IMR-90 (cell line): ENCODE measurements at regions of chr10 and their contacts with region 1.

Region 1: GRCh38 chr10:95133016-95133752 is 60.9 kb upstream of the ACSM6 start:
- DNase-seq: peak; percentile 73
- ATAC-seq: peak; percentile 82
- H3K4me3 ChIP-seq: no peak overlapping the region
- H3K27ac ChIP-seq: no peak overlapping the region
- H3K4me1 ChIP-seq: no peaks in the 10 kb centered on the region
- H3K27me3 ChIP-seq: no peaks in the 10 kb centered on the region
- CTCF ChIP-seq: peak; percentile 80
- POLR2A ChIP-seq: no peak
- RAD21 ChIP-seq: peak; percentile 92

Region 2: GRCh38 chr10:94630017-94630688 is 503.0 kb before region 1 on chr10:
- CTCF ChIA-PET with region 1: no interaction called
- POLR2A ChIA-PET with region 1: no interaction called
- dilution Hi-C with region 1: no loop called
- in situ Hi-C with region 1: no loop called
- intact Hi-C with region 1: loop called (anchors 2 kb)
- DNase-seq: peak; percentile 12
- ATAC-seq: no peak
- H3K4me3 ChIP-seq: no peak overlapping the region
- H3K27ac ChIP-seq: no peak overlapping the region
- H3K4me1 ChIP-seq: no peaks in the 10 kb centered on the region
- H3K27me3 ChIP-seq: no peaks in the 10 kb centered on the region
- CTCF ChIP-seq: peak; percentile 59
- POLR2A ChIP-seq: no peak
- RAD21 ChIP-seq: peak; percentile 47

Region 3: DNA sequence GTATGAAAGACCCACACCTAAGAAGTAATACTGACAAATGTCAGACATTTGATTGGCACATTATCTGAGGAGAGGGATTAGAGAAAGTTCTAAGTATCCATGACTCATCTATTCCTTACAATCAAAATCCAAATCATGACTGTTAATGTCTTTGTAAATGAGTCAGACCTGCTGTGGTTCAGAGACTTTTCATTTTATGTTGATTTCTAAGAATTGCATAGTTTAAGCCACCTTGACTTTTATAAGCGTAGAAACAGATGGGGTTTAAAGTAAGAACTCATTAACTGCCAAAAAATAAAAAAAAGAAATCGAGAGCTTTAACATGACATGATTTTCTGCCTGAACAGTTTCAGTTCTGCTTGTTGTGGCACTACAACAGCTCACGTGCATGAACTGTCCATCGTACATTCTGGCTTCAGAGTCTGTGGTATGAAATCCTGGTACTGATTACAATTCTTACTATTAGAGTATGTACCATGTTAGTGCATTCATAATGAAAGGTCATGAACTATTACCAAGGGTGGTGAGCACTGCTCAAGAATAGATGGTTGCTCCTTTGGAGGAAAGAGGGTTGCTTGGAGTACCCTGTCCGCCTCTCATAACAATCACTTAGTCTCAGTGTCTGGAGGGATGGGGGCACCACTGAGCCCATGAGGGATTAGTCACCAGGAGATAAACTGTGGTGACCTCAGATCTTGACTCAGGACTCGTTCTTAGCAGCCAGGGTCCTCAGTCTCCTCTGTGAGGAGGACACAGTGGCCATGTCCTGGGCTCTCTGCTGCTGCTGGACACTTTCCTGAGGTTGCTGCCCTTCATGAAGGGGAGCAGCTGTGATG is 103.1 kb after region 1 on chr10:
- CTCF ChIA-PET with region 1: no interaction called
- POLR2A ChIA-PET with region 1: no interaction called
- dilution Hi-C with region 1: no loop called
- in situ Hi-C with region 1: loop called (anchors 10 kb)
- intact Hi-C with region 1: no loop called
- DNase-seq: peak; percentile 81
- ATAC-seq: peak; percentile 52
- H3K4me3 ChIP-seq: no peak overlapping the region
- H3K27ac ChIP-seq: no peak overlapping the region
- H3K4me1 ChIP-seq: peaks cover 12% of the 10 kb centered on the region
- H3K27me3 ChIP-seq: no peaks in the 10 kb centered on the region
- CTCF ChIP-seq: no peak
- POLR2A ChIP-seq: no peak
- RAD21 ChIP-seq: no peak

Region 4: GRCh38 chr10:95260397-95260881 is 127.3 kb after region 1 on chr10:
- CTCF ChIA-PET with region 1: no interaction called
- POLR2A ChIA-PET with region 1: no interaction called
- dilution Hi-C with region 1: no loop called
- in situ Hi-C with region 1: no loop called
- intact Hi-C with region 1: no loop called
- DNase-seq: peak; percentile 94
- ATAC-seq: peak; percentile 86
- H3K4me3 ChIP-seq: no peak overlapping the region
- H3K27ac ChIP-seq: peak overlapping the region; percentile 52
- H3K4me1 ChIP-seq: peaks cover 18% of the 10 kb centered on the region
- H3K27me3 ChIP-seq: no peaks in the 10 kb centered on the region
- CTCF ChIP-seq: no peak
- POLR2A ChIP-seq: no peak
- RAD21 ChIP-seq: no peak

Region 5: DNA sequence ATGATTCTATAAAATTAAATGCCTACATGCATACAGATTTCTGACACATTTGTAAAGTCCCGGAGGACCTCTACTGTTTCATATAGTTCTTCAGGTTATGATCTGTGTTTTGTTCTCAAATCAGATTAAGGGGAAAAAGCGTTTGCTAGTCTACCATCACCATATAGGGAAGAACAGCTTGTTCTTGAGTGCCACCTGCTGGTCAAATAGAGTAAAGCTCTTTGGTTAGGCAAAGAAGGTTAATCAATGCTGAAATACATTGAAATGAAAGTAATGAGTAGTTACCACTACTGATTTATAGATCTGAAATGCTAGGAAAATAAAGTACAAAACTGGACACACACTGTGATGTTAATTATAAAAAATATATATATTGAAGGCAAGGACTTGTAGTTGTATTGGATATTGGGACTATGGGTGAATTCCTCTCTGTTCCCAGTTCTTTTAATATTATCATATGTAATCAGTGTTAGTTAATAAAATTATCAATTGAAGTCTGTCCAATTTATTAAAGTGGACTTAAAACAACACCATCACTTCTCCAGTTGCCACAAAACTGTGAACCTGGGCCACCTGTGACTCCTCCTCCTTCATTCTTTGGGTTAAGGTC is 230.2 kb after region 1 on chr10:
- CTCF ChIA-PET with region 1: no interaction called
- POLR2A ChIA-PET with region 1: no interaction called
- dilution Hi-C with region 1: no loop called
- in situ Hi-C with region 1: loop called (anchors 5 kb)
- intact Hi-C with region 1: loop called (anchors 1 kb)
- DNase-seq: peak; percentile 77
- ATAC-seq: peak; percentile 79
- H3K4me3 ChIP-seq: no peak overlapping the region
- H3K27ac ChIP-seq: no peak overlapping the region
- H3K4me1 ChIP-seq: no peaks in the 10 kb centered on the region
- H3K27me3 ChIP-seq: peaks cover 3% of the 10 kb centered on the region
- CTCF ChIP-seq: peak; percentile 94
- POLR2A ChIP-seq: peak; percentile 41; the same call in 1 of the 2 replicates
- RAD21 ChIP-seq: peak; percentile 99

Region 6: GRCh38 chr10:95430231-95430951 is 297.2 kb after region 1 on chr10:
- CTCF ChIA-PET with region 1: no interaction called
- POLR2A ChIA-PET with region 1: no interaction called
- dilution Hi-C with region 1: no loop called
- in situ Hi-C with region 1: no loop called
- intact Hi-C with region 1: loop called (anchors 5 kb)
- DNase-seq: peak; percentile 44
- ATAC-seq: peak; percentile 91
- H3K4me3 ChIP-seq: no peak overlapping the region
- H3K27ac ChIP-seq: no peak overlapping the region
- H3K4me1 ChIP-seq: no peaks in the 10 kb centered on the region
- H3K27me3 ChIP-seq: peaks cover 15% of the 10 kb centered on the region
- CTCF ChIP-seq: peak; percentile 90
- POLR2A ChIP-seq: no peak
- RAD21 ChIP-seq: peak; percentile 87

Region 7: DNA sequence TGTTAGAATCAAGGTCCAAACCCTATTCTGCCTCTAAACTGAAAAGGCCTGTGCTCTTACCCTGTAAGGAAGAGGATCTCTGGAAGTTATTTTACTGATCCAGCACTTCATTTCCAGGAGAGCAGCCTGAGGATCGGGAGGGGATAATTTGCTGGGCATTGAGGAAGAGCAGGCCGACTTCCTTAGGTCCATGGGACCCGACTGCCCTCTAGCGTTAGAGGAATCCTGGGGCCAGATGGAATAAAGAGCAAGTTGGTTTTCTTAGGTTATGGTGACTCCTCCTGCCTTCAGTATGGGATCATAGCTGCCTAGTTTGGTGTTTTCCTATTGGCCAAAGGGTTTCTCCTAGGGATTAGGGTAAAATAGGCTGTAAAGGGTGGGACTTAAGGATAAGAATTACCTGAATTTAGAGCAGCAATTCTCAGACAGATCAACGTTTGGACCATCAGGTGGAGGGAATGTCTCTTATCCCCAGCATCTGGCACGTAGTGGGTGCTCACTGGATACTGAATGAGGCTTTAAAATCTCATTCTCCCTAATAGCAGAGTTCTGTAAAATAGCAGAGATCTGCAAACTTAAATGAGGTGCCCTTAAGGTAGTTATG is 468.0 kb after region 1 on chr10:
- CTCF ChIA-PET with region 1: interaction called, 3 read pairs
- POLR2A ChIA-PET with region 1: interaction called, 4 read pairs
- dilution Hi-C with region 1: no loop called
- in situ Hi-C with region 1: loop called (anchors 10 kb)
- intact Hi-C with region 1: loop called (anchors 1 kb)
- DNase-seq: peak; percentile 84
- ATAC-seq: peak; percentile 96
- H3K4me3 ChIP-seq: no peak overlapping the region
- H3K27ac ChIP-seq: no peak overlapping the region
- H3K4me1 ChIP-seq: no peaks in the 10 kb centered on the region
- H3K27me3 ChIP-seq: peaks cover 2% of the 10 kb centered on the region; the same call in 1 of the 2 replicates
- CTCF ChIP-seq: peak; percentile 96
- POLR2A ChIP-seq: peak; percentile 52; the same call in 1 of the 2 replicates
- RAD21 ChIP-seq: peak; percentile 97